Thyroid gland (tissue), 4 donors: ENCODE measurements at regions of chr14 and their contacts with region 1.

Region 1: GRCh38 chr14:88562831-88563686 is at the start of gene ZC3H14:
- DNase-seq: peak; percentile 81 to 85
- H3K4me3 ChIP-seq: peak within 1 kb of the TSS; percentile 83 to 96 (median 96)
- H3K27ac ChIP-seq: peak within 1 kb of the TSS; percentile 95 to 98 (median 97)
- H3K4me1 ChIP-seq: peaks cover 11 to 12% of the 10 kb centered on the region in 2 donors
- H3K27me3 ChIP-seq: no peaks in the 10 kb centered on the region
- CTCF ChIP-seq: no peak
- POLR2A ChIP-seq: peak in 1 of 2 donors; percentile 86
- total RNA-seq, gene ZC3H14: 88.5 to 112 (median 104) TPM

Region 2: GRCh38 chr14:88492272-88493089 is 70.6 kb before region 1 on chr14:
- intact Hi-C with region 1: loop called (anchors 5 kb)
- DNase-seq: peak; percentile 63
- H3K4me3 ChIP-seq: no peak overlapping the region
- H3K27ac ChIP-seq: no peak overlapping the region
- H3K4me1 ChIP-seq: peaks cover 9 to 10% of the 10 kb centered on the region in 2 donors
- H3K27me3 ChIP-seq: no peaks in the 10 kb centered on the region
- CTCF ChIP-seq: peak; percentile 70 to 96 (median 86)
- POLR2A ChIP-seq: no peak

Region 3: DNA sequence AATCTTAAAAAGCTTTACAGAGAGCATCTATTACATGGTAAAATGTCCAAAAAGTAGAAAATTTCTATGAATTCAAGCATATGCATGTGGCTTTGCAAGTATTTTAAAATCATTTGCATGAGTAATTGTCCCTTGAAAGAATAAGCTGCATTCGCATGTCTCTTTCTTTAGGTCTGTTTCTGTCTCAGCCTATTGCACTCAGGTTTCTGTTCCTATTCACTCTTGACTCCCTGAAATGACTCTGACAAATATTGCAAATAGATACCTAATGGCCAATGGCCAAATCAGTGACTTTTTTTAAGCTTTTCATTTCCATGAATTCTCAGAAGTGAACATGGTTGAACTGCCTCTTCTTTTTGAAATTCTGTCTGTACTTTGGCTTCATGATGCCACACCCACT is 255.0 kb after region 1 on chr14:
- intact Hi-C with region 1: no loop called
- DNase-seq: no peak
- H3K4me3 ChIP-seq: no peak overlapping the region
- H3K27ac ChIP-seq: no peak overlapping the region
- H3K4me1 ChIP-seq: no peaks in the 10 kb centered on the region
- H3K27me3 ChIP-seq: no peaks in the 10 kb centered on the region
- CTCF ChIP-seq: no peak
- POLR2A ChIP-seq: no peak